Activated B cell treated with CpG ODN at 0.5 μM for 24 hours (primary cell): ENCODE measurements at regions of chr9 and their contacts with region 1.

Region 1: DNA sequence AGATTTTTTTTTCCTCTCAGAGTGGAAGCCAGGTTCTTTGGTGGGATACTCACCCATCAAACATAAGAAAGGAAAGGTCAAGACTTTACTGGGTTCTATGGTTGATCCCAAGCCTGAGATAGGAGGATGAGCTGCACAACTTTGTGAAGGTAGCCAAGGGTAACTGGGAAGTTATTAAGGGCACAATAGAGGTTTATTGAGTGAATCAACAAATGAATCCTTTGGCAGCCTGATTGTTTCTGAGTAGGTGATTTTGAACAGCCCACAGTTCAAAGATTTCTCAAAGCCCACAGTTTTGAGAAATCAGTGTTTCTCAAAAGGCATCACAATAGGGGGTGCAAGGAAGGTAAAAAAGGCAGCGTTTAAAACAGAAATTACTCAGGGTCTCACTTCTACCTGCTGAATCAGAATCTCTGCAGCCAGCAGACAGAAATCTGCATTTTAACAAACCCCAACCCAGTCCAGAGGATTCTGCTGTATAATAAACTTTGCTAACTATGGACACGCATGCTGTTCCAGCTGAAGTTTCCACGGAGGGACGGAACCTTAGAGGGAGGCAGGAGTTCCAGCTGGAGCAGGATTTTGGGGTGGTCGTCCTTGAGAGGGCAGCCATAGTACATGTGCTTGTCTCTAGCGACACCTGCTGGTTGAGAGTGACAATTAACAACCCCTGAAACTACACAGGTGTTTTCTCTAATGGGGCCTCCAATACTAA is 32.7 kb upstream of the FSD1L start:
- DNase-seq: peak; percentile 18
- ATAC-seq: peak; percentile 85
- H3K4me3 Mint-ChIP-seq: no peak overlapping the region
- H3K27ac Mint-ChIP-seq: no peak overlapping the region
- H3K4me1 Mint-ChIP-seq: peaks cover 4% of the 10 kb centered on the region
- H3K27me3 Mint-ChIP-seq: no peaks in the 10 kb centered on the region
- CTCF ChIP-seq: no peak

Region 2: GRCh38 chr9:105157130-105157583 is 257.9 kb before region 1 on chr9:
- CTCF ChIA-PET with region 1: interaction called, 3 read pairs
- POLR2A ChIA-PET with region 1: no interaction called
- intact Hi-C with region 1: loop called (anchors 1 kb)
- DNase-seq: no peak
- ATAC-seq: peak; percentile 50
- H3K4me3 Mint-ChIP-seq: no peak overlapping the region
- H3K27ac Mint-ChIP-seq: no peak overlapping the region
- H3K4me1 Mint-ChIP-seq: no peaks in the 10 kb centered on the region
- H3K27me3 Mint-ChIP-seq: no peaks in the 10 kb centered on the region
- CTCF ChIP-seq: no peak

Region 3: DNA sequence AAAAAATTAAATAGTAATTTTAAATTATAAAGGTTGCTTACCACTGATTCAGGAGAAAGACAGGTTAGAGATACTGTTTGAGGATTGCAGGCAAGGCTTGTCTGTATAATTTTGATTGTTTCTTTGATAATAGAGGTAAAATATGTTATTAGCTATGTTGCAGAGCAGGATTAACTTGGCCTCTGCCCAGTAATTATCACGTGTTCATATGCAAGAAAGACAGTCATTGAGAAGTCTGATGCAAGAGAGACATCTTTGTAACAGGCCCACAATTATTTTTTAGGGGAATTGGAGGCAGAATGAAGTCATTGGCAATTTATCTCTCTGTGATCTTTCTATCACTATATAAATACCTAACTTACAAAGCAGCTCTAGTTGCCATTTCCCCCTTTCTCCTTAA is 124.7 kb before region 1 on chr9:
- CTCF ChIA-PET with region 1: no interaction called
- POLR2A ChIA-PET with region 1: no interaction called
- intact Hi-C with region 1: no loop called
- DNase-seq: no peak
- ATAC-seq: no peak
- H3K4me3 Mint-ChIP-seq: no peak overlapping the region
- H3K27ac Mint-ChIP-seq: no peak overlapping the region
- H3K4me1 Mint-ChIP-seq: no peaks in the 10 kb centered on the region
- H3K27me3 Mint-ChIP-seq: no peaks in the 10 kb centered on the region
- CTCF ChIP-seq: no peak

Region 4: GRCh38 chr9:105541838-105542237 is 126.7 kb after region 1 on chr9:
- CTCF ChIA-PET with region 1: no interaction called
- POLR2A ChIA-PET with region 1: no interaction called
- intact Hi-C with region 1: no loop called
- DNase-seq: no peak
- ATAC-seq: peak; percentile 95
- H3K4me3 Mint-ChIP-seq: no peak overlapping the region
- H3K27ac Mint-ChIP-seq: no peak overlapping the region
- H3K4me1 Mint-ChIP-seq: peaks cover 12% of the 10 kb centered on the region
- H3K27me3 Mint-ChIP-seq: no peaks in the 10 kb centered on the region
- CTCF ChIP-seq: no peak